ENCODE measurements at regions of chr19 and their contacts with region 1.

Region 1: DNA sequence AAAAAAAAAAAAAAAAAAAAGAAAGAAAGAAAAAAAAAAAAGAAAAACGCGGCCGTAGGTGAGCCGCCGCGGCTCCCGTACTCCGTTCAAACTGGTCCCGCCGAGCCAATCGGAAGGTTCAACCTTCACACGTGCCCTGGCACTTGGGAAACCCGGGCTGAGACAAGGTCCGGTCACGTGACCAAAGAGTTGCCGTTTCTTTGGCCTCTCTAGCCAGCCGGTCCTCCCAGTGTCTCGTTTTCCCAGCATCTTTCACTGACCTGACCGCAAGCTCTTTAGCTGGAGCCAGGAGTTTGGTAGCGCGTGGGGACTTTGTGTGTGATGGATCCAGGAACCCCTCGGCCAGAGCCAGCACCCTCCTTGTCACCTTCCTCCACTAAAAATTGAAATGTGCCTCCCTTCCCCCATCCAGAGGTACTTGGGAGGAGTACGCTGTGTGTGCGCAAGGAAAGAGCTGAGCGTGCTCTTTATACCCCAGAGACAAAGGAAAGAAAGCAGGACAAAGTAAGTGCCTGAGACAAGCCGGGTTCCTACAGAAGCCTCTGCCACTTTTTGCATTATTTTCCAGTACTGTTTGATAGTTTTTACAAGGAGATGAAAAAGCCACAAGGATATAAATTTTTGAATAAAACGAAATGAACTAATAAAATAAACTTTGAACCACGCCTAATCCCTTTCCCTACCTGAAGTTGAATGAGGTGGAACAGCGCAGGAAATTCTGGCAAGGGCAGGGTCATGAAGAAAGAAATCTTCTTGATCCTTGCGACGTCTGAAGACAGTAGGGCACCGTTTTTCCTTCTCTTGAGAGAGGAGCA is 959 bp downstream of the TNPO2 start:
- DNase-seq: peak; percentile 86
- ATAC-seq: peak; percentile 84
- H3K4me3 Mint-ChIP-seq: peak overlapping the region; percentile 89
- H3K27ac Mint-ChIP-seq: peak overlapping the region; percentile 86
- H3K4me1 Mint-ChIP-seq: peaks cover 18% of the 10 kb centered on the region
- H3K27me3 Mint-ChIP-seq: no peaks in the 10 kb centered on the region

Region 2: DNA sequence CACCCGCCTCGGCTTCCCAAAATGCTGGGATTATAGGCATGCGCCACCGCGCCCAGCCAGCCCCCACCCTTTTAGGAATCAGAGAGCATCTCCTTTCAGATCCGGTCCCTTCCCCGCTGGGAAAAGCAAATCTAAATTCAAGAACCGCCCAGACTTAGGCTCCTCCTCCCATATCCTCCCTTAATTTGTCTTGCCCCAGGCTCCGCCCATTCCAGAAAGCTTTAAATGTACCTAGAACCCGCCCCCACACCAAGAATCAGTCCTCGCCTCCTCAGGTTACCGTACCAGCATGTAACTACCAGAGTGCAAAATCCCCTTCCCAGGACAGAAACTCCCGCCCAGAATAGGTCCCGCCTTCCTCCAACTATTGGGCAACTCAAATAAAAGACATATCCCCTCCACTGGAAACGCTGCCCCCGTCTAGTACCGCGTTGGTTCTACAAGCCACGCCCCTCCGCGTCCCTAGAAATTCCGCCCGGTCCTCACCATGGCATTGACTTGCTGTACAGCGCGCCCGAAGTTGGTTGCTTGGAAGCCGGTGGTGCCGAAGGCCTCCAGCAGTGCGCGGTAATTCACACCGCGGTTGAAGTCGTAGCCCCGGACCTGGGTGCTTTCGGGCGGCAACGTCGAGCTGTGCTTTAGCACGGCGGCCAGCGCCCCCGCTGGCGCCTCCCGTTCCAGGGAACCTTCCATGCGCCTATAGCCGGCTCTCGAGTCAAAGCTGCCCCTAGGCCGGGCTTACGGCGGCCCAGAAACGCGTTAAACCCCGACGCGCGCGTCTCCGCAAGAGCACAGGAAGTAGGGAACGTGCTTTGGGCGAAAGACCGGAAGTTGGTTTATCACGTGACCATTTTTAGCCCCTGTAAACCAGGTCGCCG is 41.5 kb before region 1 on chr19 and contains the start of gene DHPS:
- POLR2A ChIA-PET with region 1: interaction called, 25 read pairs
- DNase-seq: peak; percentile 82
- ATAC-seq: peak; percentile 75
- H3K4me3 Mint-ChIP-seq: peak within 1 kb of the TSS; percentile 89
- H3K27ac Mint-ChIP-seq: peak within 1 kb of the TSS; percentile 89
- H3K4me1 Mint-ChIP-seq: peaks cover 18% of the 10 kb centered on the region
- H3K27me3 Mint-ChIP-seq: no peaks in the 10 kb centered on the region
- total RNA-seq, gene DHPS: 148 to 149 TPM

Region 3: GRCh38 chr19:12696366-12697335 is 26.1 kb before region 1 on chr19 and contains the start of gene FBXW9:
- POLR2A ChIA-PET with region 1: interaction called, 24 read pairs
- DNase-seq: peak; percentile 98
- ATAC-seq: peak; percentile 84
- H3K4me3 Mint-ChIP-seq: peak within 1 kb of the TSS; percentile 93
- H3K27ac Mint-ChIP-seq: peak within 1 kb of the TSS; percentile 97
- H3K4me1 Mint-ChIP-seq: peaks cover 10% of the 10 kb centered on the region
- H3K27me3 Mint-ChIP-seq: no peaks in the 10 kb centered on the region
- total RNA-seq, gene FBXW9: 4.9 to 5.3 TPM

Region 4: DNA sequence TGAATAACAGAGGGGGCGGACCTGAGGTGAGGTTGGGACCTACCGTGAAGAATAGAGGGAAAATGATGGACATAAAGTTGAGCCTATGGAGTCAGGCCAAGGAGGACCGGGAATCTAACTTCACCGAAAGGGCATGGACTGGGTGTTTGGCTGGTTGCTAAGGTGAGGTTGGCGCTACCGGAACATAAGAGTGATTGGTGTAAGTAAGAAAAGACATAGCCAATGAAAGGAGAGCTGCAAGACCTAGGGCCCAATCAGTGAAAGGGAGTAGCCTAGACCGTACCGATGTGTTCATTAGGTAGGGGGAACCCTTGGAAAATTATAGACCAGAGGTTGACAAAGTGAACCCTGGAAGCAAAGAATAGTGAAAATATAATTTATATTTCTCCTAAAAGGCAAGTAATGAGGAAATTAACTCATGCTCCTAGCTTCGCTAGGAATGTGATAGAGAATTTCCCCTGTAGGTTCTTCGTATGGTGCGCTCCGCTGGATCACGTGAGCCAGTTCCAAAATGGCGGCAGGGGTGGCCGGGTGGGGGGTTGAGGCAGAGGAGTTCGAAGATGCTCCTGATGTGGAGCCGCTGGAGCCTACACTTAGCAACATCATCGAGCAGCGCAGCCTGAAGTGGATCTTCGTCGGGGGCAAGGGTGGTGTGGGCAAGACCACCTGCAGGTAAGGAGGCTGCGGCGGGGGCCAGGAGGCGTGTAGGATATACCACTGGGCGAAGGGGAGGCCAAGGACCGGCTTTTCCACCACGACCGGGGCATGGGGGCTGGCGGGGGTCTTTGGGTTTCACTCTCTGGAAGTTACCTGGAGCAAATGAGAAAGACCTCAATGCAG is 14.4 kb after region 1 on chr19 and contains the start of gene GET3:
- POLR2A ChIA-PET with region 1: interaction called, 162 read pairs
- DNase-seq: peak; percentile 80
- ATAC-seq: peak; percentile 83
- H3K4me3 Mint-ChIP-seq: peak within 1 kb of the TSS; percentile 100
- H3K27ac Mint-ChIP-seq: peak within 1 kb of the TSS; percentile 98
- H3K4me1 Mint-ChIP-seq: peaks cover 24% of the 10 kb centered on the region
- H3K27me3 Mint-ChIP-seq: no peaks in the 10 kb centered on the region
- total RNA-seq, gene GET3: 46.4 to 47.2 TPM

Region 5: GRCh38 chr19:12783849-12784344 is 61.1 kb after region 1 on chr19:
- POLR2A ChIA-PET with region 1: no interaction called
- DNase-seq: no peak
- ATAC-seq: no peak
- H3K4me3 Mint-ChIP-seq: no peak overlapping the region
- H3K27ac Mint-ChIP-seq: peak overlapping the region; percentile 81
- H3K4me1 Mint-ChIP-seq: peaks cover 24% of the 10 kb centered on the region
- H3K27me3 Mint-ChIP-seq: no peaks in the 10 kb centered on the region

Region 6: DNA sequence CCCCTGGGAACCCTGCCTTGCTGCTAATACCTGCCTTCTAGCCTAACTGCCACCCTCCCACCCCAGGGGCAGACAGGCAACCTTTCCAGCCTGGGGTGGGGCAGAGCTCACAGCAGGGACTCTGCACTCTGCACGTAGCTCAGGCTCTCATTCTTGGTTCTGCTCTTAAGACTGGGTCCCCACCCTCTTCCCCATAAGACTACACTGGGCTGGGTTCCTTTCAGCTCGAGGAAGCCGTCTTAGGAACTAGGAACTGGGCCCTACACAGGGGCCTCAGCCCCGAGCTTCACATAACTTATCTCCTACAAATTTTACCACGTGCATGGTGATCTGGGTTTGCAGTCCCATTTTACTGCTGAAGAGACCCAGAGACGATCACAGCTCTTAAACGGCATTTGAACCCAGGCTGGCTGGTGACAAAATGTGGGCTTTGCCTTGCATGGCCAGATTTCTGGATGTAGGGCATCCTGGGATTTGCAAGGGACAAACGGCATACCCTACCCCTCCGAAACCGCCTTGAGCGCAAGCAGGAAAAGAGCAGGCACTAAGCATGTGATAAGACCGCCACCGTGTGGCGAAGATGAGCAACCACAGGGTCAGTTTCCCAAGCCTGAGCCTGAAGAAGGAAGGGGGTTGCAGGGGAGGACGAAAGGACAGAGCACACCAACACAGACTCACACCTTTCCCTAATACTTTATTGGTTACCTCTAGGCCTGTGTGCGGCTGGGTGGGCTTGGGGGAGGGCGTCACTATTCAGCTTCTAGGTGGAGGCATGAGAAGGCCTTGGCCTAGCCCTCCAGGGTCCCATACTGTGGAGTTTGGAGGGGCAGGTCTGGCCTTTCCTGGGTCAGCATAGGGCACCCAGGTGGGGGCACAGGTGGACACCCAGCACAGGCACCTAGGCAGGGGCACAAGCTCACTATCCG is 73.6 kb after region 1 on chr19:
- POLR2A ChIA-PET with region 1: interaction called, 18 read pairs
- DNase-seq: peak; percentile 80
- ATAC-seq: no peak
- H3K4me3 Mint-ChIP-seq: peak overlapping the region; percentile 79
- H3K27ac Mint-ChIP-seq: peak overlapping the region; percentile 82
- H3K4me1 Mint-ChIP-seq: peaks cover 28% of the 10 kb centered on the region
- H3K27me3 Mint-ChIP-seq: no peaks in the 10 kb centered on the region